Endothelial cell of umbilical vein (primary cell): ENCODE measurements at regions of chr16 and their contacts with region 1.

Region 1: DNA sequence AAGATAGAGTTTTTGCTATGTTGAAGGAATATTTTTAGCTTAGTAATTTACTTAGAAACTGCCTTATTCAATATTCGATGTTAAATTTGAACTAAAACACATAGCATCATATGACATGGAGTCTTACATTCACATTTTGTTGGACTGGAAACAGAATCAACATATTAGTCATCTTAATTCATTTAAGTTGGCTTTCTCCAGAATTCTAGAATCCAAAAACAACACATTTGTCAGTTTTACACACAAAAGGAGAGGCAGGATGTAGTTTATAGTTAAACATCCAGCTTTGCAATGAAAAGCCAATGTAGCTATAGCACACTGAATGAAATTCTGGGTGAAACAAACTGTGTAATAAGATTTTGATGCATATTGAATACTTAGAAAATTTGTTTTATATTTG is 43.3 kb downstream of the WWOX start:
- DNase-seq: peak; percentile 84
- H3K4me3 ChIP-seq: no peak overlapping the region
- H3K27ac ChIP-seq: peak overlapping the region; percentile 3
- H3K4me1 ChIP-seq: peaks cover 21% of the 10 kb centered on the region
- H3K27me3 ChIP-seq: no peaks in the 10 kb centered on the region
- CTCF ChIP-seq: no peak
- POLR2A ChIP-seq: no peak

Region 2: DNA sequence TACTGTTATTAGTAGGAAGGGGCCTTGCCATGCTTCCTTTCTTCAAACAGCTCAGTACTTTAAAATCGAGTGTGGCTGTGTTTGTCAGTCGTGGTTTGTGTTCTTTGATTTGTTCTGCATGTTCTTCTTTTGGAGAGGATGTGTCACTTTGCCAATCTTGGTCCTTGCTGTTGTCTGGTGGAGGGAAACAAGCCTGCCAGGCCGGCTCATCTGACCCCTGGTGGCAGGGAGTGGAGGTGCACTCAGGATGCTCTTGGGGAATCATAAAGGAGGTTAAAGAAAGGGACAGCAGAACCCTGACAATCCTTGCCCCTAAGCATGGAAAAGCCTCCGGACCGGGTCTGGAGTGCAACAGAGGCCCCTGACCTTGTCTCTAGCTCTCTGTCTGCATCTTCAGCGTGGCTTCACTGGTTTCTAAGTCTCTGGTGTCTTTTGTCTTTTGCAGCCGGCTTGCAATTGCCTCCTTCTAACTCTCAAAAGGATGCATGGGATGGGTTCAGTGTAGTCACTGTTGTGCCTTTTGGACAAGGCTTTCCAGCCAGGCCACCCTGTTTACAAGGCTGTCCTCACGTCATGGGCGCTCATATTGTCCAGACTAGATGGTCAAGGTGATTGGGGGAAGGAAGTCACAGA is 92.5 kb after region 1 on chr16:
- CTCF ChIA-PET with region 1: interaction called, 3 read pairs
- POLR2A ChIA-PET with region 1: no interaction called
- dilution Hi-C with region 1: no loop called
- intact Hi-C with region 1: loop called (anchors 5 kb)
- DNase-seq: peak; percentile 78
- H3K4me3 ChIP-seq: no peak overlapping the region
- H3K27ac ChIP-seq: no peak overlapping the region
- H3K4me1 ChIP-seq: no peaks in the 10 kb centered on the region
- H3K27me3 ChIP-seq: no peaks in the 10 kb centered on the region
- CTCF ChIP-seq: peak; percentile 89 to 96
- POLR2A ChIP-seq: no peak